ENCODE measurements at regions of chr4 and their contacts with region 1.

Region 1: GRCh38 chr4:44726262-44726871 is at the start of gene GNPDA2:
- DNase-seq: peak; percentile 92
- H3K4me3 ChIP-seq: peak within 1 kb of the TSS; percentile 57 to 89 (median 69)
- H3K27ac ChIP-seq: peak within 1 kb of the TSS; percentile 4
- H3K4me1 ChIP-seq: peaks cover 15% of the 10 kb centered on the region
- H3K27me3 ChIP-seq: no peaks in the 10 kb centered on the region
- CTCF ChIP-seq: peak in 1 of 2 donors; percentile 43
- POLR2A ChIP-seq: peak; percentile 93
- total RNA-seq, gene GNPDA2: 14.7 TPM in 2 replicates

Region 2: GRCh38 chr4:44448548-44449461 is 277.6 kb before region 1 on chr4 and contains the start of gene KCTD8:
- CTCF ChIA-PET with region 1: no interaction called
- POLR2A ChIA-PET with region 1: no interaction called
- dilution Hi-C with region 1: no loop called
- intact Hi-C with region 1: loop called (anchors 10 kb)
- DNase-seq: peak; percentile 78
- H3K4me3 ChIP-seq: peak within 1 kb of the TSS in 2 of 3 experiments; percentile 30 to 36
- H3K27ac ChIP-seq: no peak within 1 kb of the TSS
- H3K4me1 ChIP-seq: peaks cover 10% of the 10 kb centered on the region
- H3K27me3 ChIP-seq: peaks cover 25 to 66% of the 10 kb centered on the region in 2 experiments
- CTCF ChIP-seq: peak; percentile 73 to 83
- POLR2A ChIP-seq: no peak
- total RNA-seq, gene KCTD8: 0.80 and 0.88 TPM in 2 replicates

Region 3: DNA sequence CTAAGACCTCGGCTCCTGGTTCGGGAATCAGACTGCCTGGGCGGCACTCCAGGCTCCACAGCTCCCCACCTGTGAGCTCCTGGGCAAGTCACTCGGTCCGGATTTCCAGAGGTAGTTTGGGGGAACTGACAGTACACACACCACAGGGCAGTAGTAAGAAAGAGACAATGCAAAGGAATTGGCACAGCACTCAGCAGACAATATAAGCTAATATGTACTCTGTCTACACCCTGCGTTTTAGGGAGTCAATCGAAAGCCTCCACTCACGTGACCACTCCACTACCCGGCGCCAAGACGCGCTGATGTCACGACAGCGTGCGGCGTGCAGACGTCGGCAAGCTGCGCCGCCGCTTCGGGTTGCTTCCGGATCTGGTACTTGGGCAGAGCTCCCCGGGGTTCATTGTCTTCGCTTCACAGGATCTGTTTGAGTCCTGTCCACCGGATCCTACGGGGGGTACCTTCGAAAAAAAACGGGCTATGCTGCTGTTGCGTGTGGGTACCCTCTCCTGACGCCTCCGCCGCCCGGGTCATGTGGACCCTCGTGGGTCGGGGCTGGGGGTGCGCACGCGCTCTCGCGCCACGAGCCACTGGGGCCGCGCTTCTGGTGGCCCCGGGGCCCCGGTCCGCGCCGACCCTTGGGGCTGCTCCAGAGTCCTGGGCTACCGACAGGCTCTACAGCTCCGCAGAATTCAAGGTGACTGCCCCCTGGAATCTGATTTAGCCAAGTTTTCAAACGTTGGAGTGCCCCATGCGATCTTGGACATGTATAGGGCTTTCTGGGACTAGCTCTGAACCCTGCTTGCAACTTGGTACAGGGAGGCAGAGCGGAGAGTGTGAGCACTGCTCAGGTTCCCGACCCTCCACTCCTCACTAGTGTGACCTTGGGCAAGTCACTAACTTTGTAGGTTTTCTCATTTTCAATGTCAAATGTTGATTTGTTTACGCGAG is 48.0 kb before region 1 on chr4 and contains the start of gene GUF1:
- CTCF ChIA-PET with region 1: interaction called, 7 read pairs
- POLR2A ChIA-PET with region 1: no interaction called
- dilution Hi-C with region 1: no loop called
- intact Hi-C with region 1: loop called (anchors 1 kb)
- DNase-seq: peak; percentile 93
- H3K4me3 ChIP-seq: peak within 1 kb of the TSS; percentile 66 to 87 (median 68)
- H3K27ac ChIP-seq: peak within 1 kb of the TSS; percentile 83
- H3K4me1 ChIP-seq: peaks cover 18% of the 10 kb centered on the region
- H3K27me3 ChIP-seq: peaks cover 0 to 6% of the 10 kb centered on the region in 2 experiments
- CTCF ChIP-seq: no peak
- POLR2A ChIP-seq: peak; percentile 93
- total RNA-seq, gene GUF1: 19.9 and 20.2 TPM in 2 replicates

Measured in endothelial cell of umbilical vein (primary cell).